Activated CD4-positive, alpha-beta memory T cell treated with anti-CD3 and anti-CD28 coated beads, Interleukin-2, amount 10 ng/mL, durations not matched to agents 7 days and 5 days (primary cell): ENCODE measurements at regions of chr5 and their contacts with region 1.

Region 1: GRCh38 chr5:132019857-132020555 is 8.5 kb upstream of the ACSL6 start:
- DNase-seq: peak; percentile 89
- H3K4me3 Mint-ChIP-seq: peak overlapping the region; percentile 54
- H3K27ac Mint-ChIP-seq: peak overlapping the region; percentile 96
- H3K4me1 Mint-ChIP-seq: peaks cover 58% of the 10 kb centered on the region
- H3K27me3 Mint-ChIP-seq: peaks cover 43% of the 10 kb centered on the region

Region 2: DNA sequence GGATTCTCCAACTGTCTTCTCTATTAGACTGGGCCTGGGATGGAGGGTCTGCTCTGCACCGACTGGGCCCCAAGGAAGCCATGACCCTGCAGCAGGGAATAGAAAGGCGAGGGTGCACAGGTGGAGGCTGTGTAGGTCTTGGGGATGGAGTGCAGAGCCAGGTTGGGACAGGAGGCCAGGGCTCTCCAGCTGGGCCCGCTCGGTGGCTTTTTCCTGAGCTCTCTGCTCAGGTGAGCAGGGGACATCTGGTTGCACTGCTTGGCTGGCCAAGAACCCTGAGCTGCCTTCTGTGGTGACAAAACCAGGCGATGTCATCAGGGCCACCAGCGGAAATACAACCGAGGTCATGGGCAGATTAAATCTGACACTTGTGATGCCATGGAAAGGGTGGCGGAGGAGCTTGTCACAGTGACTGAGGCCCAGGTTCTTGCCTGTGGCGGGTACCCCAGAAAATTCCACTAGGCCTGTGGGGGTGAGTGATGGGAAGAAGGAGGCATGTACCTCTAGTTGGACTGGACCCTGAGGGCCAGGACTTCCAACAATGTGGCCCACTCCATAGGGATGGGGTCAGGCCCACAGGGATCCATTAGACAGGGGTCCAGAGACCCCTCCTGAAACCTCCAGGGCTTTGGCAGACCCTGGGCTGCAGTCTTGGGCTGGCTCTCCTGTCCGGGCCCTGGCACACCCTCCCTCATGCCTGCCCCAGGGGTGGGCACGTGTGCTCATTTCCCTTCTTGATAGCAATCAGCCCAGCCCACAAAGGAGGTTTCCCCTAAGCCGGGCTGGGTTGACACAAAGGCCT is 36.0 kb after region 1 on chr5:
- CTCF ChIA-PET with region 1: no interaction called
- POLR2A ChIA-PET with region 1: interaction called, 15 read pairs
- DNase-seq: peak; percentile 76
- H3K4me3 Mint-ChIP-seq: no peak overlapping the region
- H3K27ac Mint-ChIP-seq: peak overlapping the region; percentile 70
- H3K4me1 Mint-ChIP-seq: peaks cover 64% of the 10 kb centered on the region
- H3K27me3 Mint-ChIP-seq: peaks cover 34% of the 10 kb centered on the region

Region 3: DNA sequence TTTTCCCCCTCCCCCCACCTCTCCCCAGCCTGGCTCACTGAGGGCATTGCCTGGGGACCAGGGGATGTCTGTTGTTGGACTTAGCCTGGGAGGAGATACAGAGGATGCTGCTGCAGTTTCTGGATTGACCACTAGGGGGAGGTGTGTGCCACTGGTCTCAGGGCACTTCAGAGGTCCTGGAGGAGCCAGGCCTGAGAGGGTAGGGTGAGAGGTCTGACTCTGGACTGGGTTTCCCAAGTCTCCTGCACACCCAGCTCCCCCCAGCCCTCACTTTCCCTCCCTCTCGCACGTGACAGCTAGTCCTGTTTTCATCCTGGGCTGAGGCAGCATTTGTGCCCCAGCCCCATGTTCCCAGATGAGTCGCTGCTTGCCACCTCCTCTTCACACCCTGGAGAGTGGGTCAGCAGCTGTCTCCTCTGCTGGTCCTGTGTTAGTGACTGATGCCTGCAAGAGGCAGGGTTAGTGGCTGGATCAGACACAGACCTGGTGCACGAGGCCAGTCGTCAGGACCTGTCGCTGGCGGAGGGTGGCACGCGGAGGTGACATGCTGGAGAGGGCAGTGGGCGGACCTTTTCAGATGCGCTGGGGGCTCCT is 44.8 kb after region 1 on chr5:
- CTCF ChIA-PET with region 1: interaction called, 13 read pairs
- POLR2A ChIA-PET with region 1: interaction called, 5 read pairs
- DNase-seq: peak; percentile 85
- H3K4me3 Mint-ChIP-seq: no peak overlapping the region
- H3K27ac Mint-ChIP-seq: no peak overlapping the region
- H3K4me1 Mint-ChIP-seq: peaks cover 35% of the 10 kb centered on the region
- H3K27me3 Mint-ChIP-seq: no peaks in the 10 kb centered on the region